PC-9 (cell line): ENCODE measurements at regions of chr21 and their contacts with region 1.

Region 1: DNA sequence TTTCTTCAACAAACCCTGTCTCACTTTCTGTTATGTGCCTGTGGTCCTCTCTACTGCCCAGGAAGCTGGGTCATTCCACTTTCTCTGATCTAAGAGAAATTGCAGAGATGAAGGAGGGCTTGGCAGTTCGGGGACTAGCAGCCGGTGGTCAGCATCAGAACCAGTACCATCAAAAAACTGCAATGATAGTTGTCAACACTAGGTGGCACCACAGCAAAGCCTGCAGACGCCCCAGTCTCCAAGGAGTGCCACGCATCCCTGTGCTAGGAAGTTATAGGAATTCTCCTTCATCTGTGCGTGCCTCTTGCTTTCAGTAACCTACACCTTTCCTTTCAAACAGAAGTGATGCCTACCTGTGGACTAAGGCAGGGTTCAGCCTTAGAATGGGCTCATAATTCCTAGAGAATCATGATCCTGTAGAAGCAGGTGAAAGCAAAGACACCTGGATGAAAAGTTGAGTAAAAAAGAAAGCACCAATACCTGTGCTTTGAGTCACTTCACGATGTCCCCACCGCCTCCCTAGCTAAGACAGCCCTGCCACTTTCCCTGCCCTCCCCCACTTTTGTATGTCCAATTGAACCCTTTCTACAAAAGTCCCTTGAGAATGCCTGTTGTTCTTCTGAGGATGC is 129.2 kb downstream of the ADAMTS1 start:
- DNase-seq: peak in 1 of 2 experiments; percentile 20
- H3K4me3 ChIP-seq: no peak overlapping the region
- H3K27ac ChIP-seq: no peak overlapping the region
- H3K4me1 ChIP-seq: no peaks in the 10 kb centered on the region
- H3K27me3 ChIP-seq: no peaks in the 10 kb centered on the region
- CTCF ChIP-seq: peak; percentile 69

Region 2: DNA sequence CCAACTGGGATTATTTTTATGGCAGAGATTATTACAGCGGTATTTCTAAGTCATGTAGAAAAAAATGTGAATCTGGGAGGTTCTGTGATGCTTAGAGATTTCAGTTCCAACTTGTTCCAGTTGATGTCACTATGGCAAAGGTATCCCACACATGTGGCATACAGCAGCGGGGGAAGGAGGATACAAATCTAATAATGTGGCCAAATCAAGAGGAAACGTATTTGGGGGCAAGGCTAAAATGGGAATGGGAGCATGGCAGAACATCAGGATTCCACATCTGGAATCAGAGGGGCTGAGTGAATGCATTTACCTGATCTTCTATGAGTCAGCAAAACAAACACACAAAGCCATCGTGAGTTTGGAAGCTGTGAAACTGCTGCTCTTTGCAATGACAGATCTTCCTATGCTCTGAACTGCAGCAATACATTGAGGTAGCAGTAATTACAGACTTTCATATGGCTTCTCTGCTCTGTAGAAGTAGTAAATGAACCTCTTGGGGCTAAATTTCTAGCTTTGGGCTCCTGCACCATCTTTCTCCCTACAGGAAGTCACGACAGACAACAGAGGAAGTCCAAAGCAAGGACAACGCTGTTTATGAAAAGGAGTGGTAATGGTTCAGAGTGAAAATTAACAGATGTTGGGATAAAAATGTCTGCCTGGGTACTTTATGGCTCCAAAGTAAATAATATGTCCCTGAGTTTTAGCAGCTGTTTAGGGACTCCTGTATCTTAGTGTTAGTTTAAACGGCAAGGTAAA is 925.7 kb before region 1 on chr21:
- CTCF ChIA-PET with region 1: interaction called, 3 read pairs
- POLR2A ChIA-PET with region 1: no interaction called
- intact Hi-C with region 1: loop called (anchors 10 kb)
- DNase-seq: peak in 1 of 2 experiments; percentile 3
- H3K4me3 ChIP-seq: no peak overlapping the region
- H3K27ac ChIP-seq: no peak overlapping the region
- H3K4me1 ChIP-seq: no peaks in the 10 kb centered on the region
- H3K27me3 ChIP-seq: no peaks in the 10 kb centered on the region
- CTCF ChIP-seq: peak; percentile 37; the same call in 1 of the 2 replicates

Region 3: DNA sequence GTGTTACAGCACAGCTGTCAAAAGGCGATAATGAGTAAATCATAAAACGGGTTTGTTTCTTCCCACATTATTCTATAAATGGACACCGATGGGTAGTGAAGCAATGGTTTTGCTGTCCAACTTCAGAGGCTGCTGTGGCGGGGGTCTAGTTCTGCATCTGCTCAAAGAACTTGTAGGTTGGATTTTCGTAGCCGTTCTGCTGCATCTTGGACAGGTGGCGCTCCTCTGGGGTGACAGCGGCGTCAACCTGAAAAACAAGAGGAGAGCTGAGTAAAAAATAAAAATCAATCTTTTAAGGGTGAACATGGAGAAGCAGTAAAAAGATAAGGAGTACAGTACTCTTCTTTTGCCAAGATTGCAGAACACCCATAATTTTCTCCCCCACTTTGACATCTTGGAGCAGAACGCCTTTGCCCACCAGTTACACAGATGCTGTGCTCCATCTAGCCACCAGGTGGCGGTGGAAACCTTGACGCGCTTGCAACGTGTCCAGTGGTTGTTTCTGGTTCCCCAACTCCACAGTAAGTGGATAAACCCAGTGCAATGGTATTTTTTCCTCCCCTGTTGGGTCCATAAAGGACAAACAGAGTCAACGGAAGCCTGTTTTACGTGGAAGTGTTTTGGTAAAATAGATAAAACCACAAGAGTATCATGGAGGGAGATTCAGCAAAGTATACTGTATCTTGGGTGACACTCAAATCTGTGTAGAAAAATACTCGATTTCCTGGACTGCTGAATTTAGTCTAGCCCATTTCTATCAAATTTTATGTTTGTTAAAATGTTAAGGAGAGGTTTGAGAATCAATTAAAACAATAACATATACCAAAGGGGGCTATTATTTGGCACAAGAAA is 834.2 kb before region 1 on chr21:
- CTCF ChIA-PET with region 1: no interaction called
- POLR2A ChIA-PET with region 1: no interaction called
- intact Hi-C with region 1: loop called (anchors 2 kb)
- DNase-seq: peak in 1 of 2 experiments; percentile 41
- H3K4me3 ChIP-seq: no peak overlapping the region
- H3K27ac ChIP-seq: no peak overlapping the region
- H3K4me1 ChIP-seq: no peaks in the 10 kb centered on the region
- H3K27me3 ChIP-seq: no peaks in the 10 kb centered on the region
- CTCF ChIP-seq: peak; percentile 83